Activated CD4-positive, alpha-beta T cell treated with anti-CD3 and anti-CD28 coated beads for 36 hours (primary cell): ENCODE measurements at regions of chr11 and their contacts with region 1.

Region 1: DNA sequence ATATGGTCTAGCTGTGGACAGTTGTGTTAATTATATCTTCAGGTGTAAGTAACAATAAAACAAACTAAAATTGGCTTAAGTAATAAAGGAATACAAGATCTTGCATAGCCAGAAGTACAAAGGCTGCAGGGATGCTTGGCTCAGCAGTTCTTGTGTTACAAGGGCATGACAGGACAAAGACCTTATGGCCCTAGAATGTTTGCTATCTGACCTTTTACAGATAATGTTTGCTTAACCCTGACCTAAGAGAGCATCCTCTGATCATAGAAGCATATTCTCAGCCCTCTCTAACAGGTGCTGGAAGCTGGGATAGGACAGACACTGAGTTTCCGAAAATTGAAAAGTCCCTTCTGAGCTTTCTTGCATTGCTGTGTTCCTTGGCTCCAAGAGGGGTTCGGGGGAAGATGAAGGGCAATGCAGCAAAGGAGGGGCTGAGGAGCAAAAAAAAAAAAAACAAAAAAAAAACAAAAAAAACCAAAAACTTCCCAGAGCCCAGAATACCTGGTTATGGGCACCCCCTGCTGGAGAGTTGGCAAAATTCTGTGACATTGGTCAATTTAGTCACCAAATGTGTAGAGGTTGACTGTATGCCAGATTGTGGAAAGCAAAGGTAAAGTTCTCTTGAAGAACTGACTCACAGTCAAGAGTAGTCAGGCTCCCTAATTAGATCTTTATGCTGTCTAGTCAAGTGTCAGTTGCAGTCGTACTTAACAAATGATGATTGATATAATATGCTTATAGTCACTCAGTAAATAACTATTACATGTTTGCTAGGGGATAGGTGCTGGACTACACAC is 10.4 kb upstream of the HIKESHI start:
- DNase-seq: peak; percentile 85
- ATAC-seq: peak; percentile 48
- H3K4me3 Mint-ChIP-seq: peak overlapping the region; percentile 17
- H3K27ac Mint-ChIP-seq: peak overlapping the region; percentile 89
- H3K4me1 Mint-ChIP-seq: peaks cover 63% of the 10 kb centered on the region
- H3K27me3 Mint-ChIP-seq: no peaks in the 10 kb centered on the region

Region 2: DNA sequence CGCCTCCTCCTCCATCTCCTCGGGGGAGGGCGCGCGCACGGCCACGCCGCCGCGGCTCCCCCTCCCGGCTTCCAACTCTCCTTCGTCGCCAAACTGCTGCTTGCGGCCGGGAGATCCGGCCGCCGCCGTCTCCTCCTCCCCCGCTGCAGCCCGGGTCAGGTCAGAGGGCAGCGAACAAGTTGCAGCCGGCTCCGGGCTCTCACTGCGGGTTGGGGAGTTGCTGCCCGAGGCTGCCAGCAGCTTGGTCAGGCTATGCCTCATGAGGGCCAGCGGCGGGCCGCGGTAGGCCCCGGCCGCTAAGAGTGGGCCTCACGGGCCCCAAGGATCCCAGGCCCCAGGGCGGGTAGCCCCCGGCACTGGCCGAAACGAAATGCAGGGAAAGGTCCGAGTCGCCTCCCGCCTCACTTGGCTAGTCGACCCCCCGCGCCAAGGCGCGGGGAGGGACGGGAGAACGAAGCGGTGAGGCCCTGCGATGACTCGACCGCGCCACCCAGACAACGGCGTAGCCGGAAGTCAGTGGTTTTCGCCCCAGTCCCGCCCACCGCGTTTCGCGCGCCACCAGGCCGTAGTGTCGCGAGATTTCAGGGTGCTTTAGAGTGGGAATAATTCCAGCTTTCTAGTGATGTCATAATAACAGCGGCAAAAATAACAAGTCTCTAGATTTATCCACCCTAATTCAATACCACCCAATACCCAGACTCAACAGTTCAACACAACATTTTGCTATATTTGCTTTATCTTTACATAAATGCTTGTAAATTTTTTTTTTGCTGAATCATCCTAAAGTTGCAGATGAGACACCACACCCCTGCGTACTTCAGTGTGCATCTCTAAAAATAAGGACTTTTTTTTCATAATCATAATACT is 626.8 kb before region 1 on chr11 and contains the start of gene CREBZF:
- CTCF ChIA-PET with region 1: no interaction called
- POLR2A ChIA-PET with region 1: no interaction called
- intact Hi-C with region 1: loop called in 1 of 2 experiments (anchors 2 kb)
- DNase-seq: peak; percentile 97
- ATAC-seq: peak; percentile 88
- H3K4me3 Mint-ChIP-seq: peak within 1 kb of the TSS; percentile 100
- H3K27ac Mint-ChIP-seq: peak within 1 kb of the TSS; percentile 99
- H3K4me1 Mint-ChIP-seq: peaks cover 29% of the 10 kb centered on the region
- H3K27me3 Mint-ChIP-seq: no peaks in the 10 kb centered on the region
- total RNA-seq, gene CREBZF: 30.4 to 35.9 TPM

Region 3: DNA sequence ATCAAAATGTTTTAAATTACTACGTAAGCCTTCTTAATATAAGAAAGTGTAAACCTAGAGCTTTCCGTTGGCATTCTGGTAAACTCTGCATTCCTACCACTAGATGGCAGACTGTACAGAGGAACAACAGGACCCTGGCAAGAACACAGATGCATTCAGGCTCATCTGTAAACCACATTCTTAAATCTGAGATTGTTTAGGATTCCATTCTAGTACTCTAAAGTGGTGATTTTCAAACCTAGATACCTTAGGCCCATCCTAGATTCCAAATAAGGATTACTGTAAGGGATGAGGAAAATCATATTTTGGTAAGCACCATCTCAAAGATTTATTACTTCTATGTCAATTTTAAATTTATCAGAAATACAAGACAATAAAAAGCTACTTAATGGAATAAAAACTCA is 249.7 kb before region 1 on chr11:
- CTCF ChIA-PET with region 1: interaction called, 35 read pairs
- POLR2A ChIA-PET with region 1: interaction called, 3 read pairs
- intact Hi-C with region 1: loop called (anchors 1 kb)
- DNase-seq: peak; percentile 63
- ATAC-seq: peak; percentile 70
- H3K4me3 Mint-ChIP-seq: peak overlapping the region; percentile 20
- H3K27ac Mint-ChIP-seq: peak overlapping the region; percentile 68
- H3K4me1 Mint-ChIP-seq: peaks cover 71% of the 10 kb centered on the region
- H3K27me3 Mint-ChIP-seq: no peaks in the 10 kb centered on the region

Region 4: GRCh38 chr11:86138958-86139357 is 152.7 kb before region 1 on chr11:
- CTCF ChIA-PET with region 1: no interaction called
- POLR2A ChIA-PET with region 1: no interaction called
- intact Hi-C with region 1: loop called in 1 of 2 experiments (anchors 2 kb)
- DNase-seq: peak; percentile 41
- ATAC-seq: peak; percentile 81
- H3K4me3 Mint-ChIP-seq: no peak overlapping the region
- H3K27ac Mint-ChIP-seq: peak overlapping the region; percentile 55
- H3K4me1 Mint-ChIP-seq: peaks cover 31% of the 10 kb centered on the region
- H3K27me3 Mint-ChIP-seq: no peaks in the 10 kb centered on the region

Region 5: GRCh38 chr11:86230921-86231430 is 60.7 kb before region 1 on chr11:
- CTCF ChIA-PET with region 1: interaction called, 4 read pairs
- POLR2A ChIA-PET with region 1: interaction called, 3 read pairs
- intact Hi-C with region 1: loop called (anchors 1 kb)
- DNase-seq: no peak
- ATAC-seq: peak; percentile 28
- H3K4me3 Mint-ChIP-seq: peak overlapping the region; percentile 20
- H3K27ac Mint-ChIP-seq: peak overlapping the region; percentile 86
- H3K4me1 Mint-ChIP-seq: peaks cover 65% of the 10 kb centered on the region
- H3K27me3 Mint-ChIP-seq: no peaks in the 10 kb centered on the region

Region 6: GRCh38 chr11:86511086-86511551 is 219.5 kb after region 1 on chr11:
- CTCF ChIA-PET with region 1: no interaction called
- POLR2A ChIA-PET with region 1: no interaction called
- intact Hi-C with region 1: loop called in 1 of 2 experiments (anchors 1 kb)
- DNase-seq: peak; percentile 14
- ATAC-seq: peak; percentile 82
- H3K4me3 Mint-ChIP-seq: no peak overlapping the region
- H3K27ac Mint-ChIP-seq: no peak overlapping the region
- H3K4me1 Mint-ChIP-seq: no peaks in the 10 kb centered on the region
- H3K27me3 Mint-ChIP-seq: no peaks in the 10 kb centered on the region